ENCODE measurements at regions of chr19 and their contacts with region 1.

Region 1: GRCh38 chr19:3125900-3126524 is 9.8 kb upstream of the GNA15 start:
- DNase-seq: peak; percentile 41 to 71 (median 68)
- H3K4me3 ChIP-seq: no peak overlapping the region
- H3K4me3 Mint-ChIP-seq: no peak overlapping the region
- H3K27ac ChIP-seq: no peak overlapping the region
- H3K27ac Mint-ChIP-seq: peak overlapping the region in 2 of 7 donors; percentile 72 to 84
- H3K4me1 ChIP-seq: peaks cover 4% of the 10 kb centered on the region
- H3K4me1 Mint-ChIP-seq: peaks cover 5 to 7% (median 5%) of the 10 kb centered on the region in 4 donors
- H3K27me3 ChIP-seq: no peaks in the 10 kb centered on the region
- H3K27me3 Mint-ChIP-seq: no peaks in the 10 kb centered on the region

Region 2: GRCh38 chr19:2900296-2901252 is 225.4 kb before region 1 on chr19 and contains the start of gene ZNF57:
- CTCF ChIA-PET with region 1: no interaction called
- POLR2A ChIA-PET with region 1: no interaction called
- intact Hi-C with region 1: no loop called
- DNase-seq: peak; percentile 92 to 98 (median 97)
- H3K4me3 ChIP-seq: peak within 1 kb of the TSS; percentile 52 to 90
- H3K4me3 Mint-ChIP-seq: peak within 1 kb of the TSS; percentile 93 to 100 (median 96)
- H3K27ac ChIP-seq: peak within 1 kb of the TSS; percentile 47
- H3K27ac Mint-ChIP-seq: peak within 1 kb of the TSS; percentile 81 to 94 (median 92)
- H3K4me1 ChIP-seq: peaks cover 15% of the 10 kb centered on the region
- H3K4me1 Mint-ChIP-seq: peaks cover 15 to 29% (median 20%) of the 10 kb centered on the region in 4 donors
- H3K27me3 ChIP-seq: no peaks in the 10 kb centered on the region
- H3K27me3 Mint-ChIP-seq: no peaks in the 10 kb centered on the region
- total RNA-seq, gene ZNF57: 4.2 to 4.7 TPM

Region 3: GRCh38 chr19:2912306-2912705 is 213.7 kb before region 1 on chr19:
- CTCF ChIA-PET with region 1: no interaction called
- POLR2A ChIA-PET with region 1: no interaction called
- intact Hi-C with region 1: no loop called
- DNase-seq: no peak
- H3K4me3 ChIP-seq: no peak overlapping the region
- H3K4me3 Mint-ChIP-seq: no peak overlapping the region
- H3K27ac ChIP-seq: no peak overlapping the region
- H3K27ac Mint-ChIP-seq: no peak overlapping the region
- H3K4me1 ChIP-seq: no peaks in the 10 kb centered on the region
- H3K4me1 Mint-ChIP-seq: peaks cover 9 to 15% (median 13%) of the 10 kb centered on the region in 4 donors
- H3K27me3 ChIP-seq: no peaks in the 10 kb centered on the region
- H3K27me3 Mint-ChIP-seq: no peaks in the 10 kb centered on the region

Region 4: GRCh38 chr19:2962045-2962561 is 163.9 kb before region 1 on chr19:
- CTCF ChIA-PET with region 1: interaction called, 24 read pairs
- POLR2A ChIA-PET with region 1: no interaction called
- intact Hi-C with region 1: loop called (anchors 1 kb)
- DNase-seq: peak; percentile 72 to 80 (median 77)
- H3K4me3 ChIP-seq: no peak overlapping the region
- H3K4me3 Mint-ChIP-seq: peak overlapping the region in 2 of 8 donors; percentile 16 to 17
- H3K27ac ChIP-seq: no peak overlapping the region
- H3K27ac Mint-ChIP-seq: peak overlapping the region; percentile 48 to 92 (median 85)
- H3K4me1 ChIP-seq: no peaks in the 10 kb centered on the region
- H3K4me1 Mint-ChIP-seq: peaks cover 4 to 6% (median 5%) of the 10 kb centered on the region in 4 donors
- H3K27me3 ChIP-seq: no peaks in the 10 kb centered on the region
- H3K27me3 Mint-ChIP-seq: no peaks in the 10 kb centered on the region

Region 5: DNA sequence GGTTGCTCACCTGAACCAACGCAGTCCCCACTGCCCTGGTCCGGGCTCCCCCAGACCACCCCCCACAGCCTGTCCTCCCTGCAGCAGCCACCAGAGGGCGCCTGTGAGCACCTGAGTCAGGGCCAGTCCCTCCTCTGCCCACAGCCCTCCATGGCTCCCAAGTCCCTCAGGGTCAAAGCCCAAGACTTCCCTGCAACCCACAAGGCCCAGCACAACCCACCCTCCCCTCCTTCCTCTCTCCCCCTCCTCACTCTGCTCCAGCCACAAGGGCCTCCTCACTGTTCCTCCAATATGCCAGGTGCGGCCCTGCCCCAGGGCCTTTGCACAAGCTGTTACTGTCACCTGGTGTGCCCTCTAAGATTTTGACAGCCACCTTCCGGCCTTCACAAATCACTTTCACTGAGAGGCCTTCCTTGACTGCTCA is 20.7 kb after region 1 on chr19:
- CTCF ChIA-PET with region 1: interaction called, 158 read pairs
- POLR2A ChIA-PET with region 1: interaction called, 7 read pairs
- intact Hi-C with region 1: no loop called
- DNase-seq: peak; percentile 45 to 66 (median 49)
- H3K4me3 ChIP-seq: no peak overlapping the region
- H3K4me3 Mint-ChIP-seq: peak overlapping the region in 2 of 8 donors; percentile 20 to 52
- H3K27ac ChIP-seq: no peak overlapping the region
- H3K27ac Mint-ChIP-seq: peak overlapping the region; percentile 62 to 83 (median 73)
- H3K4me1 ChIP-seq: peaks cover 13% of the 10 kb centered on the region
- H3K4me1 Mint-ChIP-seq: peaks cover 10 to 32% (median 18%) of the 10 kb centered on the region in 4 donors
- H3K27me3 ChIP-seq: no peaks in the 10 kb centered on the region
- H3K27me3 Mint-ChIP-seq: no peaks in the 10 kb centered on the region

Region 6: DNA sequence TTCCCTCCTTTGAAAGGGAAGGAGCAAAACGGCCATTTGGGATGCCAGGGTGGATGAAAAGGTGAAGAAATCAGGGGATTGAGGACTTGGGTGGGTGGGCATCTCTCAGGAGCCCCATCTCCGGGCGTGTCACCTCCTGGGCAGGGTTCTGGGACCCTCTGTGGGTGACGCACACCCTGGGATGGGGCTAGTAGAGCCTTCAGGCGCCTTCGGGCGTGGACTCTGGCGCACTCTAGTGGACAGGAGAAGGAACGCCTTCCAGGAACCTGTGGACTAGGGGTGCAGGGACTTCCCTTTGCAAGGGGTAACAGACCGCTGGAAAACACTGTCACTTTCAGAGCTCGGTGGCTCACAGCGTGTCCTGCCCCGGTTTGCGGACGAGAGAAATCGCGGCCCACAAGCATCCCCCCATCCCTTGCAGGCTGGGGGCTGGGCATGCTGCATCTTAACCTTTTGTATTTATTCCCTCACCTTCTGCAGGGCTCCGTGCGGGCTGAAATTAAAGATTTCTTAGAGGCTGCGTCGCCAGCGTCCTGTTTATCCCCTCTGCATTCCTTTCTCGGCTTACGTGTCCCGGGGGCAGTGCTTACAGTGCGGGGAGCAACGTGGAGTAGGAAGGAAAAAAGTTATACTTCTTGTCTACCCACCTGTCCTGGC is 37.3 kb after region 1 on chr19:
- CTCF ChIA-PET with region 1: interaction called, 101 read pairs
- POLR2A ChIA-PET with region 1: interaction called, 6 read pairs
- intact Hi-C with region 1: loop called (anchors 1 kb)
- DNase-seq: peak; percentile 69 to 73 (median 71)
- H3K4me3 ChIP-seq: no peak overlapping the region
- H3K4me3 Mint-ChIP-seq: peak overlapping the region in 3 of 8 donors; percentile 5 to 55 (median 55)
- H3K27ac ChIP-seq: no peak overlapping the region
- H3K27ac Mint-ChIP-seq: peak overlapping the region; percentile 62 to 92 (median 77)
- H3K4me1 ChIP-seq: peaks cover 11% of the 10 kb centered on the region
- H3K4me1 Mint-ChIP-seq: peaks cover 9 to 30% (median 15%) of the 10 kb centered on the region in 4 donors
- H3K27me3 ChIP-seq: no peaks in the 10 kb centered on the region
- H3K27me3 Mint-ChIP-seq: no peaks in the 10 kb centered on the region

Region 7: GRCh38 chr19:3176603-3177501 is 50.8 kb after region 1 on chr19:
- CTCF ChIA-PET with region 1: interaction called, 7 read pairs
- POLR2A ChIA-PET with region 1: interaction called, 12 read pairs
- intact Hi-C with region 1: loop called (anchors 5 kb)
- DNase-seq: peak; percentile 56 to 89 (median 64)
- H3K4me3 ChIP-seq: peak overlapping the region; percentile 67 to 68
- H3K4me3 Mint-ChIP-seq: peak overlapping the region; percentile 80 to 90 (median 84)
- H3K27ac ChIP-seq: peak overlapping the region; percentile 80
- H3K27ac Mint-ChIP-seq: peak overlapping the region; percentile 92 to 98 (median 96)
- H3K4me1 ChIP-seq: peaks cover 26% of the 10 kb centered on the region
- H3K4me1 Mint-ChIP-seq: peaks cover 12 to 41% (median 23%) of the 10 kb centered on the region in 4 donors
- H3K27me3 ChIP-seq: no peaks in the 10 kb centered on the region
- H3K27me3 Mint-ChIP-seq: no peaks in the 10 kb centered on the region

Region 8: GRCh38 chr19:3210347-3211017 is 84.5 kb after region 1 on chr19:
- CTCF ChIA-PET with region 1: interaction called, 3 read pairs
- POLR2A ChIA-PET with region 1: no interaction called
- intact Hi-C with region 1: loop called (anchors 1 kb)
- DNase-seq: peak; percentile 56 to 67 (median 58)
- H3K4me3 ChIP-seq: no peak overlapping the region
- H3K4me3 Mint-ChIP-seq: no peak overlapping the region
- H3K27ac ChIP-seq: no peak overlapping the region
- H3K27ac Mint-ChIP-seq: peak overlapping the region in 4 of 7 donors; percentile 16 to 84 (median 30)
- H3K4me1 ChIP-seq: no peaks in the 10 kb centered on the region
- H3K4me1 Mint-ChIP-seq: peaks cover 0 to 10% (median 4%) of the 10 kb centered on the region in 4 donors
- H3K27me3 ChIP-seq: no peaks in the 10 kb centered on the region
- H3K27me3 Mint-ChIP-seq: no peaks in the 10 kb centered on the region